CD8-positive, alpha-beta T cell (primary cell): ENCODE measurements at regions of chr3 and their contacts with region 1.

Region 1: DNA sequence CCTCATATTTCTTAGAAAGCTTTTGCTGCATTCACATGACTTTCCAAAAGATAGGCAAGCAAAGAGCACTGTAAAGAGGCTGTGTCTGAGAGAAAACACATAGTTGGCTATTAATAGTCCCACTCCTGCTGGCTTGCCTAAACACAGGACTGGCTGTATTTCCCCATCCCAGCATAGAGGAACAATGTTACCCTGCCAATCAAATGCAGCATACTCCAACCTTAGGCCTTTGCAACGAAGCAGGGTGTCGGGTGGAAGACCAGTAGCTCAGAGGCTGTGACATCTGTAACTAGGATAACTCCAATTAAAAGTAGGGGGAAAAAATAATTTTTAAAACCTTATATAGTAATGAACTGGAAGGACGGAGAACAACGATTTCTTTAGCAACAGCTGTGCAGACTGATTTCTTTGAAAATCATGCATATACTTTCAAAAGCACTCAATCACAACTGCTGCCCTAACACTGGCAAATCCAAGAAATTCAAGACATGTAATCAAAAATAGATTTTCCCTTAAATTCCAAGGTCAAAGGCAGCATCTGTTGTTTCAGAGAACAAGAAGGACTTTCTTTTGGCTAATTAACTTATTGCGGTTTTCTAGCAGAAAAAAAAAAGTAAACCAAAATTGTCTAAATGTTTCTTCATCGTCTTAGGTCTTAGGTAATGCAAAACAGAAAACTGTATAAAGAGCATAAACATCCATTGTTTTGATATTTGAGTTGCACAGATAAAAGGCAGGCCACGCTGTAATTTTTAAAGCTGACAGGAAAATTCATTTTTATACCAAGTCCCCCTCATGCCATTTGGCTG is 139.3 kb downstream of the TNIK start:
- DNase-seq: no peak
- ATAC-seq: no peak
- H3K4me3 ChIP-seq: no peak overlapping the region
- H3K4me3 Mint-ChIP-seq: no peak overlapping the region
- H3K27ac ChIP-seq: no peak overlapping the region
- H3K27ac Mint-ChIP-seq: no peak overlapping the region
- H3K4me1 ChIP-seq: no peaks in the 10 kb centered on the region
- H3K4me1 Mint-ChIP-seq: peaks cover 43% of the 10 kb centered on the region
- H3K27me3 ChIP-seq: no peaks in the 10 kb centered on the region
- H3K27me3 Mint-ChIP-seq: no peaks in the 10 kb centered on the region
- CTCF ChIP-seq: no peak

Region 2: GRCh38 chr3:171230865-171231264 is 90.1 kb before region 1 on chr3:
- CTCF ChIA-PET with region 1: no interaction called
- POLR2A ChIA-PET with region 1: no interaction called
- intact Hi-C with region 1: no loop called
- DNase-seq: no peak
- ATAC-seq: no peak
- H3K4me3 ChIP-seq: no peak overlapping the region
- H3K4me3 Mint-ChIP-seq: no peak overlapping the region
- H3K27ac ChIP-seq: no peak overlapping the region
- H3K27ac Mint-ChIP-seq: peak overlapping the region; percentile 29
- H3K4me1 ChIP-seq: peaks cover 5% of the 10 kb centered on the region
- H3K4me1 Mint-ChIP-seq: peaks cover 54% of the 10 kb centered on the region
- H3K27me3 ChIP-seq: no peaks in the 10 kb centered on the region
- H3K27me3 Mint-ChIP-seq: no peaks in the 10 kb centered on the region
- CTCF ChIP-seq: no peak

Region 3: GRCh38 chr3:171334465-171334811 is 13.5 kb after region 1 on chr3:
- CTCF ChIA-PET with region 1: no interaction called
- POLR2A ChIA-PET with region 1: no interaction called
- intact Hi-C with region 1: loop called in 1 of 2 experiments (anchors 2 kb)
- DNase-seq: no peak
- ATAC-seq: no peak
- H3K4me3 ChIP-seq: no peak overlapping the region
- H3K4me3 Mint-ChIP-seq: no peak overlapping the region
- H3K27ac ChIP-seq: no peak overlapping the region
- H3K27ac Mint-ChIP-seq: peak overlapping the region; percentile 24
- H3K4me1 ChIP-seq: peaks cover 10% of the 10 kb centered on the region
- H3K4me1 Mint-ChIP-seq: peaks cover 67% of the 10 kb centered on the region
- H3K27me3 ChIP-seq: no peaks in the 10 kb centered on the region
- H3K27me3 Mint-ChIP-seq: no peaks in the 10 kb centered on the region
- CTCF ChIP-seq: no peak